ENCODE measurements at regions of chr4 and their contacts with region 1.

Region 1: GRCh38 chr4:153643406-153644383 is 40.4 kb upstream of the TLR2 start:
- DNase-seq: no peak
- H3K4me3 Mint-ChIP-seq: no peak overlapping the region
- H3K27ac Mint-ChIP-seq: no peak overlapping the region
- H3K4me1 Mint-ChIP-seq: peaks cover 17% of the 10 kb centered on the region
- H3K27me3 Mint-ChIP-seq: no peaks in the 10 kb centered on the region

Region 2: GRCh38 chr4:153142700-153143438 is 500.8 kb before region 1 on chr4:
- CTCF ChIA-PET with region 1: interaction called, 14 read pairs
- POLR2A ChIA-PET with region 1: no interaction called
- intact Hi-C with region 1: loop called (anchors 1 kb)
- DNase-seq: peak; percentile 75
- H3K4me3 Mint-ChIP-seq: no peak overlapping the region
- H3K27ac Mint-ChIP-seq: no peak overlapping the region
- H3K4me1 Mint-ChIP-seq: peaks cover 10% of the 10 kb centered on the region
- H3K27me3 Mint-ChIP-seq: no peaks in the 10 kb centered on the region

Region 3: DNA sequence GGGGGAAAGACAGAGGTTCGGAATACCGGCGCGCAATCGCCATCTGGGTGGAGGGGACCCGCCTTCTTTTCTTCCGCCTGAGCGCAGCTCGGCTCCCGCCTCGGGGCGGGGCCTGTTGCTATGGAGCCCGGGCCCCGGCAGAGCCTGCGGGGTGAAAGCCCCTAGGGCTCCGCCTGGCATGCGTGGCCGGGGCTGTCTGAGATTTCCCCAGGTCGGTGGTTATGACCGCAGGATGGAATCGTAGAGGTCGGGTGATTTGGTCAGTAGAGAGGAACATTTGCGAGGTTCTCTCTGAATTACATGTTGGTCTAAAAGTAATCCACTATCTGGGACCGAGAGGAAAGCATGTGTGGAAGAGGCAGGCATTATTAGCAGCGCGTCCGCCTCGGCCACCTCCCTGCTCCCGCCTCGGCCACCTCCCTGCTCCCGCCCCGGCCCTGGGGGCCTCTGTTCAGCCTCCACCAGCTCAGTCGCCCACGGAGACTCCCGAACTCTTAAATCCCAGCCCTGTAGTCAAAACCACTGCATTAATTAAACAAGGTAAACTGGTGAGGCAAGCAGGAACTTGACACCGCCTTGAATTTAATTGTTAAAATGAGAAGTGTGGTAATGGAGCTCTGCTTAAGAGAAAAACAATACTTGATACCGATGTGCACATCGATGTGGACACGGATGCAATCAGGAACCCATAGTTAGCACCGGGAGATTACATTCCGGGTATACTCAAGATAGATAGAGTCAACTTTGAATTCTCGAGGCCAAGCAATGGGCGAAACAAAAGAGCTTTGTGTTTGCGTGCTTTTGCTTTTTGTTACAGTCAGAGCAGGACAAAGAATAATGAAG is 394.3 kb before region 1 on chr4:
- CTCF ChIA-PET with region 1: no interaction called
- POLR2A ChIA-PET with region 1: no interaction called
- intact Hi-C with region 1: loop called (anchors 5 kb)
- DNase-seq: peak; percentile 91
- H3K4me3 Mint-ChIP-seq: peak overlapping the region; percentile 81
- H3K27ac Mint-ChIP-seq: peak overlapping the region; percentile 82
- H3K4me1 Mint-ChIP-seq: peaks cover 16% of the 10 kb centered on the region
- H3K27me3 Mint-ChIP-seq: no peaks in the 10 kb centered on the region

Region 4: DNA sequence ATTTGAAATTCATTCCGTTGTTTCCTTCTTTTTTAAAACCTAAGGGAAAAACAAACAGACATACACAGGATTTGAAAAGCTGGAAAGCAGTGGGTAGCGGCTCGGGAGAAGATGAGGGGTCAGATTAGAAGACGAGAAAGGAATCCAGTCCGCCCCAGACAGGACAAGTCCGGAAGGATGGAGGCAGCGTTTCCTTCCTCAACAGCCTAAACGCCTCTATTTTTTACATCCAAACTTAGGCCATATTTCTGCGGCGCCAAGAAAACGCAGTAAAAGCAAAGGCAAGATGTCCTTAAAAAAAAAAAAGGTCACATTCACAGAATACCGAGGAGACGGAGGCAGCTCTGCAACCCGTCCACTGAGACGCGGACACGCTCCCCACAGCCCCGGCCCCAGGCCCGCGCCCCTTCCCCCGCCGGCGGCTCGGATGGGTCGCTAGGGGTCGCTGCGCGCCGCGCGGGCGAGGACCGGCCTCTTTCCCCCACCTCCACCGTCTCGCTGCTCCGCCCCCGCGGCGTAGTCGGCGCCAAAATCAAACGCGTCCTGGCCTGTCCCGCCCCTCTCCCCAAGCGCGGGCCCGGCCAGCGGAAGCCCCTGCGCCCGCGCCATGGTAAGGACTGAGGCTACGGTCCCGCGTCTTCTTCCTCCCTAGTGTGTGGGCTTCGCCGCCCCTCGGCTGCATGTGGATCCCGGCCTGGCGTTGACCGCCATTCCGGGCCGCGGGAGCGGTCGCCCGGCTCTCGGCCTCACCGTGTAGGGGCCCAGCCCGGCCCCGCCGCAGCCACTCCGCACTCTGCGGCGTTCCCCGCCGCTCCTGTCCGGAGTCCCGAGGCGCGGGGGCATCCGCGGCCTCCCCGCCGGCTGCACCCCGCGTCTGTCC is 299.3 kb before region 1 on chr4 and contains the start of gene MND1:
- CTCF ChIA-PET with region 1: interaction called, 43 read pairs
- POLR2A ChIA-PET with region 1: interaction called, 3 read pairs
- intact Hi-C with region 1: loop called (anchors 1 kb)
- DNase-seq: peak; percentile 95
- H3K4me3 Mint-ChIP-seq: peak within 1 kb of the TSS; percentile 93
- H3K27ac Mint-ChIP-seq: peak within 1 kb of the TSS; percentile 86
- H3K4me1 Mint-ChIP-seq: peaks cover 26% of the 10 kb centered on the region
- H3K27me3 Mint-ChIP-seq: no peaks in the 10 kb centered on the region
- total RNA-seq, gene MND1: 32.0 to 36.1 TPM

Region 5: GRCh38 chr4:153432968-153433753 is 210.5 kb before region 1 on chr4:
- CTCF ChIA-PET with region 1: interaction called, 8 read pairs
- POLR2A ChIA-PET with region 1: no interaction called
- intact Hi-C with region 1: loop called (anchors 1 kb)
- DNase-seq: peak; percentile 88
- H3K4me3 Mint-ChIP-seq: peak overlapping the region; percentile 77
- H3K27ac Mint-ChIP-seq: peak overlapping the region; percentile 74
- H3K4me1 Mint-ChIP-seq: peaks cover 52% of the 10 kb centered on the region
- H3K27me3 Mint-ChIP-seq: no peaks in the 10 kb centered on the region

Region 6: GRCh38 chr4:153579872-153580271 is 63.8 kb before region 1 on chr4:
- CTCF ChIA-PET with region 1: interaction called, 4 read pairs
- POLR2A ChIA-PET with region 1: no interaction called
- intact Hi-C with region 1: loop called (anchors 5 kb)
- DNase-seq: no peak
- H3K4me3 Mint-ChIP-seq: no peak overlapping the region
- H3K27ac Mint-ChIP-seq: no peak overlapping the region
- H3K4me1 Mint-ChIP-seq: peaks cover 28% of the 10 kb centered on the region
- H3K27me3 Mint-ChIP-seq: no peaks in the 10 kb centered on the region

Region 7: DNA sequence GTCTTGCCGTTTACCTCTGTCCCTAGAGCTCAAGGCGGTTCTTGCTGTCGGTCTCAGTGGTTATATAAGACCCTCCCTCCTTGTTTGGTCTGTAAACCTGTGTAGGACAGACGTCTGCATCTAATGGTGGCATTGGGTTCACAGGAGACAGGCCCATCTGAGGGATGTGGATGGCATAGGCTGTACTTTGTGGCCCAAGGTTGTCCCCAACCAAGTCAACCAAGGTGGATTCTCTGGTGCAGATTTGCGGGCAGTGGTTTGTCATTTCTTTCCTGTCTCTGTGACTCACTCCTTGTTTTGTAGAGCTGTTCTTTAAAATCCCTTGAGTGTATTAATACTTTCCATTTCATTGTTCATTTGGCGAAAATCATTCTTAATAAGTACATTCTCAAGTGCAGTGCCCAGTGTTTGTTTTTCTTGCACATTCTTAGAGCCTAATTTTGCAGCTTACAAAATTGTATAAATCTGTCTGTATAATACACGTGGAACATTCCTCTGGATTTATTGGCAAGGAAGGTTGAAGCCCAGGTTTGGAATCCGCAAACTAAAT is 27.6 kb before region 1 on chr4:
- CTCF ChIA-PET with region 1: interaction called, 7 read pairs
- POLR2A ChIA-PET with region 1: no interaction called
- intact Hi-C with region 1: loop called (anchors 2 kb)
- DNase-seq: peak; percentile 84
- H3K4me3 Mint-ChIP-seq: no peak overlapping the region
- H3K27ac Mint-ChIP-seq: peak overlapping the region; percentile 56
- H3K4me1 Mint-ChIP-seq: peaks cover 30% of the 10 kb centered on the region
- H3K27me3 Mint-ChIP-seq: no peaks in the 10 kb centered on the region